CD4-positive, alpha-beta T cell (primary cell): ENCODE measurements at regions of chr12 and their contacts with region 1.

Region 1: DNA sequence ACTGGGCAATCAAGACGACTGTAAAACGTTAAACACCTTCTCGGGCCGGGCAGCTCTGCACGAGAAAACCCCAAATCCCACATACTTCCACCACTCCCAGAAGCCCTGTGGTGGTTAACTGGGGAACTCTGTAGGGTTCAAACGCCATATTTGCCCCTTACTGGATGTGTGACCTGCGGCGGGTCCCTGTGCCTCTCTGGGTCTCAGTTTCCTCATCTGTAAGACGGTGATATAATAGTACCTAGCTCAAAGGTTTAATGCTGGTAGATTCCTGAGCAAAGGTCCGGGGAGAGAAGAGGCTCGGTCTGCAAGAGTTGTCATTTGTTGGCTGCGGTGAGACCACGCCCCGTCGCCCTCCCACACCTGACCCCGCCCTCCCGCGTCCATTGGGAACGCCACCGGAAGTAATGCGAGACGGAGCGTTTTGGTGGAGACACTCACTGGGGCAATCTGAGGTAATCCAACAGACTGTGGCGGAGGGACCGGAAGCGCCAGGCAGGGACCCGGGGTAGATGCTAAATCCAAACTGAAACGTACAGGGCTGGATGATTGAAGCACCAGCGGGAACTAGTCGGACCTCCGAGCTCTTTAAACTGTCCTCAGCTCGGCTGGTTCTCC is 661 bp upstream of the OGFOD2 start:
- DNase-seq: peak; percentile 97 to 99 (median 99)
- ATAC-seq: peak; percentile 81
- H3K4me3 ChIP-seq: peak overlapping the region; percentile 97
- H3K4me3 Mint-ChIP-seq: peak overlapping the region; percentile 98
- H3K27ac ChIP-seq: peak overlapping the region; percentile 99 to 100
- H3K27ac Mint-ChIP-seq: peak overlapping the region; percentile 98
- H3K4me1 ChIP-seq: peaks cover 49% of the 10 kb centered on the region
- H3K4me1 Mint-ChIP-seq: peaks cover 29% of the 10 kb centered on the region
- H3K27me3 ChIP-seq: no peaks in the 10 kb centered on the region
- H3K27me3 Mint-ChIP-seq: no peaks in the 10 kb centered on the region
- CTCF ChIP-seq: no peak

Region 2: DNA sequence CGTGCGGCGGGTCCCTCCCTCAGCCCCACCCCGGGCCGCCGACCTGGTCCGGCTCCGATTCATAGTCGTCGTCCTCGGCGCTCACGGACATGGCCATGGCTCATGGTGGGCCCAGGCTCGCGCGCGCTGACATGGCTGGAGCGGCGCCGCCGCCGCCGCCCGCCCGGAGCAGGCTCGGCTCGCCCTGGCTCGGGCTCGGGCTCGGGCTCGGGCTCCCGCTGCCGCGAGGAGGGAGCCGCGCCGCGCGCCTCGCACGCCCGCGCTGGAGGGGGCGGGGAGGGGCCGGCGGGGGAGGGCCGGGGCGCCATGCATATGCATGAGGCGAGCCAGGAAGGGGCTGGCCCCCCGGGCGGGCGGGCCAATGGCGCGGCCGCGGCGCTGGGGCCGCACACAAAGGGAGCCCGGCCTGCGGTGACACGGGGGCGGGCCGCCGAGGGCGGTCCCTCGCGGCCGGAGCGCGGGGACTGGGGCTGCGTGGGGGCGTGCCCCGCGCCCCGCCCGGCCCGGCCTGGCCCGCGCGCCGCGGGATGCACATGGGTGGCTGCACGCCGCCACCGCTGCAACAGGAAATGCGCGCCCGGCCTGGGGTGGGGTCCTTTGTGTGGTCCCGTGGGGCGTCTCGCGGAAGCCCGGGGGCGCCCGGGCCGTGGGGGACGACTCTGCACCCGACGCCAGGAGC is 1507.1 kb before region 1 on chr12:
- CTCF ChIA-PET with region 1: no interaction called
- POLR2A ChIA-PET with region 1: no interaction called
- intact Hi-C with region 1: loop called in 1 of 2 experiments (anchors 5 kb)
- DNase-seq: peak; percentile 73 to 95 (median 88)
- ATAC-seq: peak; percentile 87
- H3K4me3 ChIP-seq: peak overlapping the region; percentile 49
- H3K4me3 Mint-ChIP-seq: no peak overlapping the region
- H3K27ac ChIP-seq: peak overlapping the region in 1 of 2 donors; percentile 43
- H3K27ac Mint-ChIP-seq: no peak overlapping the region
- H3K4me1 ChIP-seq: peaks cover 35% of the 10 kb centered on the region
- H3K4me1 Mint-ChIP-seq: peaks cover 39% of the 10 kb centered on the region
- H3K27me3 ChIP-seq: no peaks in the 10 kb centered on the region
- H3K27me3 Mint-ChIP-seq: no peaks in the 10 kb centered on the region
- CTCF ChIP-seq: no peak

Region 3: DNA sequence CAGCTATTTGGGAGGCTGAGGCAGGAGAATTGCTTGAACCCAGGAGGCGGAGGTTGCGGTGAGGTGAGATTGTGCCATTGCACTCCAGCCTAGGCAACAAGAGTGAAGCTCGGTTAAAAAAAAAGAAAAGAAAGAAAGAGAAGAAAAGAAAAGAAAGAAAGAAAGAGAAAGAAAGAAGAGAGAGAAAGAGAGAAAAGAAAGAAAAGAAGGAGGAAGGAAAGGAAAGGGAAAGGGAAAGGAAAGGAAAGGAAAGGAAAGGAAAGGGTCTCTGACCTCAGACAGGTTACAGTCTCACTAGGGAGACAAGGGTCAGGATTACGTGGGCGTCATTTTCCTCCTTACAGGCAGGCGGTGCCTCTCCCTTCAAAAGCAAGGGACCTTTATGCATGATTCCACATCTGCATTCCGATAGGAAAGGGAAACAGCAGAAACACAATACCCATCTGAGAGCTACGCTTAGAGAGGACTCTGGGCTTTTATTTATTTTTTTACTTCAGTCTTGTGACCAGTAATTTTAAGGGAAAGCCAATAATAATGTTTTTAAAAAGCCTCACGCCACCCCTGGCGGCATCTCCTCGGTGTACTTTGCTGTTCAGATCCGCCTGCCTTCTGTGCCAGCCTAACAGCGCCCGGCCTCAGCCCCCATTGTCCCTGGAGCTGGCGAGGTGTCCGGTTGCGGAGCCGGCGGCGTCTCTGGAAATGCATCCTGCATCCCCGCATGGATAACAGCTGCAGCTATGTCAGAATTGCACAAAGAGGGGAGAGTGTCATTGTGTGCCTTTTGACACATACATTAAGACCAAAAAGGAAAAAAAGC is 140.1 kb before region 1 on chr12:
- CTCF ChIA-PET with region 1: no interaction called
- POLR2A ChIA-PET with region 1: interaction called, 20 read pairs
- intact Hi-C with region 1: no loop called
- DNase-seq: peak in 5 of 14 experiments; percentile 11 to 59 (median 37)
- ATAC-seq: peak; percentile 8
- H3K4me3 ChIP-seq: peak overlapping the region; percentile 57
- H3K4me3 Mint-ChIP-seq: peak overlapping the region; percentile 98
- H3K27ac ChIP-seq: no peak overlapping the region
- H3K27ac Mint-ChIP-seq: peak overlapping the region; percentile 89
- H3K4me1 ChIP-seq: peaks cover 24% of the 10 kb centered on the region
- H3K4me1 Mint-ChIP-seq: peaks cover 41% of the 10 kb centered on the region
- H3K27me3 ChIP-seq: no peaks in the 10 kb centered on the region
- H3K27me3 Mint-ChIP-seq: no peaks in the 10 kb centered on the region
- CTCF ChIP-seq: no peak

Region 4: GRCh38 chr12:123085730-123086487 is 111.5 kb after region 1 on chr12:
- CTCF ChIA-PET with region 1: no interaction called
- POLR2A ChIA-PET with region 1: no interaction called
- intact Hi-C with region 1: no loop called
- DNase-seq: peak in 2 of 14 experiments; percentile 31 to 41
- ATAC-seq: no peak
- H3K4me3 ChIP-seq: no peak overlapping the region
- H3K4me3 Mint-ChIP-seq: no peak overlapping the region
- H3K27ac ChIP-seq: no peak overlapping the region
- H3K27ac Mint-ChIP-seq: peak overlapping the region; percentile 6
- H3K4me1 ChIP-seq: peaks cover 5% of the 10 kb centered on the region
- H3K4me1 Mint-ChIP-seq: peaks cover 41% of the 10 kb centered on the region
- H3K27me3 ChIP-seq: no peaks in the 10 kb centered on the region
- H3K27me3 Mint-ChIP-seq: no peaks in the 10 kb centered on the region
- CTCF ChIP-seq: no peak

Region 5: DNA sequence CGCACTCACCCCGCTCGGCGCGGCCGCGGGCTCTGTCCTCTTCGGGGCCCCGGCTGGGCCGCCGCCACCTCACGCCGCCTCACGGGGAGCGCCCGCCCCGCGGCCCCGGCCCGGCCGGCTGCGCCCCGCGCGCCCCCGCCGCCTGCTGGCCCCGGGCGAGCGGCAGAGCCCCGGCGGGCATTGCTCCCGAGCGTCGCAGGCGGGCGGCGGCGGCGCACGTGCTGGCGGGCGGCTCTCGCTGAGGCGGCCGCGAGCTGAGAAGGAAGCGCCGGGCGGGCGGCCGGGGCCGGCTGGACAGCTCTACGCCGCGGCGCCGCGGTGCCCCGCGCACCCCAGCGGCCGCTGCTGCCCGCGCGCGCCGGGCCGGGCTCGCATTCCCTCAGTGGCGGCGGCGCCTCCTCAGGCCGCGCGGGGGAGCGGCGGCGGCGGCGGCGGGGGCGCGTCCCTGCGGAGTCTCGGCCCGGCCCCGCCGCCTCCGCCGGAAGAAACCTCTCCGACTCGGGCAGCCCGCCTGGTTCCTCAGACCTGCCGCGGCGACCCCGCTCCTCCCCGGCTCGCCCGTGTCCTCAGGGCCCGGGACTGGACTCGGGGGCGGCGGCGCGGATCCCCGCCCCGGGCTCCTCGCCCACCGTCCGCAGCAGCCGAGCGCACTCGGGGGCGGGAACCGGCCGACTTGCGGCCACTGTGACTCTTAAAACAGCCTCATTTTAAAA is 176.5 kb after region 1 on chr12 and contains the start of gene PITPNM2:
- CTCF ChIA-PET with region 1: no interaction called
- POLR2A ChIA-PET with region 1: interaction called, 7 read pairs
- intact Hi-C with region 1: loop called in 1 of 2 experiments (anchors 5 kb)
- DNase-seq: peak; percentile 28 to 87 (median 60)
- ATAC-seq: peak; percentile 86
- H3K4me3 ChIP-seq: peak within 1 kb of the TSS; percentile 76
- H3K4me3 Mint-ChIP-seq: peak within 1 kb of the TSS; percentile 93
- H3K27ac ChIP-seq: peak within 1 kb of the TSS; percentile 22 to 40
- H3K27ac Mint-ChIP-seq: peak within 1 kb of the TSS; percentile 89
- H3K4me1 ChIP-seq: peaks cover 27% of the 10 kb centered on the region
- H3K4me1 Mint-ChIP-seq: peaks cover 52% of the 10 kb centered on the region
- H3K27me3 ChIP-seq: no peaks in the 10 kb centered on the region
- H3K27me3 Mint-ChIP-seq: no peaks in the 10 kb centered on the region
- CTCF ChIP-seq: no peak
- total RNA-seq, gene PITPNM2: 37.3 to 38.3 TPM

Region 6: GRCh38 chr12:123601602-123602489 is 627.5 kb after region 1 on chr12 and contains the start of gene DDX55:
- CTCF ChIA-PET with region 1: no interaction called
- POLR2A ChIA-PET with region 1: interaction called, 3 read pairs
- intact Hi-C with region 1: loop called in 1 of 2 experiments (anchors 5 kb)
- DNase-seq: peak; percentile 78 to 95 (median 84)
- ATAC-seq: peak; percentile 93
- H3K4me3 ChIP-seq: peak within 1 kb of the TSS; percentile 98
- H3K4me3 Mint-ChIP-seq: peak within 1 kb of the TSS; percentile 98
- H3K27ac ChIP-seq: peak within 1 kb of the TSS; percentile 85 to 89
- H3K27ac Mint-ChIP-seq: peak within 1 kb of the TSS; percentile 76
- H3K4me1 ChIP-seq: peaks cover 27% of the 10 kb centered on the region
- H3K4me1 Mint-ChIP-seq: peaks cover 33% of the 10 kb centered on the region
- H3K27me3 ChIP-seq: no peaks in the 10 kb centered on the region
- H3K27me3 Mint-ChIP-seq: no peaks in the 10 kb centered on the region
- CTCF ChIP-seq: peak; percentile 54
- total RNA-seq, gene DDX55: 33.3 to 37.1 TPM

Region 7: DNA sequence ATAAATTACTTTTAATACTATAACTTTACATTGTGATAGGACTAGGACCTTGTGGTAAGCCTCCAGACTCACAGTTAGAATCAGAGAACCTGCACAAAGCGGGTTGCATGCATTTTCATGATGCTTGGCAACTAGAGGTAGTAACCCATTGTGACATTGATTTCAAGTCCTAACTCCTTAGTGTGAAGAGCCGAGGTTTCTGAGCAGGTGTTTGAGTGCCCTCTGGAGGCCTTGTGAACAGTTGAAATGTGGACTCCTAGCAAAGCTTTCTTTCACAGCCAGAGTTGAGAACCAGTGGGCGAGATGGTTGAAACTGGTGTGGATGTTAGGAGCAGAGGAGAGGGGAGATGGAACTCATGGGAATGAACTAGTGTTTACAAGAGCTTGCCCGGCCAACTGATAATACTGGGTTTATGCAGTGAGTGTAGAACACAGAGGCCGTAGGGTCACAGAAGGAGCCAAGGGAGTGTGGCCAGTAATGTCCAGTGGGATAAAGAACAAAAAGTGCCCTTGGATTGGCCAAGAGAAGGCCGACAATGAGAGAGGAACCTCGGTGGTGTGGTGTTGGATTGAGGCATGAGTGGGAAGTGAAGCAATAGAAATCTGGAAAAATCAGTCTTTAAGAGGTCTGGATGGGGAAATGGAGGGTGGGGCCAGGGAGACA is 1009.6 kb after region 1 on chr12:
- CTCF ChIA-PET with region 1: no interaction called
- POLR2A ChIA-PET with region 1: no interaction called
- intact Hi-C with region 1: no loop called
- DNase-seq: peak; percentile 21 to 83 (median 39)
- ATAC-seq: peak; percentile 86
- H3K4me3 ChIP-seq: no peak overlapping the region
- H3K4me3 Mint-ChIP-seq: no peak overlapping the region
- H3K27ac ChIP-seq: no peak overlapping the region
- H3K27ac Mint-ChIP-seq: no peak overlapping the region
- H3K4me1 ChIP-seq: no peaks in the 10 kb centered on the region
- H3K4me1 Mint-ChIP-seq: peaks cover 5% of the 10 kb centered on the region
- H3K27me3 ChIP-seq: no peaks in the 10 kb centered on the region
- H3K27me3 Mint-ChIP-seq: no peaks in the 10 kb centered on the region
- CTCF ChIP-seq: peak; percentile 84